ENCODE measurements at regions of chr4 and their contacts with region 1.

Region 1: GRCh38 chr4:174631901-174632758 is 109.8 kb upstream of the HPGD start:
- DNase-seq: no peak
- H3K4me3 Mint-ChIP-seq: no peak overlapping the region
- H3K27ac Mint-ChIP-seq: no peak overlapping the region
- H3K4me1 Mint-ChIP-seq: no peaks in the 10 kb centered on the region
- H3K27me3 Mint-ChIP-seq: no peaks in the 10 kb centered on the region

Region 2: GRCh38 chr4:174490451-174490870 is 141.7 kb before region 1 on chr4:
- CTCF ChIA-PET with region 1: no interaction called
- intact Hi-C with region 1: no loop called
- DNase-seq: no peak
- H3K4me3 Mint-ChIP-seq: no peak overlapping the region
- H3K27ac Mint-ChIP-seq: no peak overlapping the region
- H3K4me1 Mint-ChIP-seq: no peaks in the 10 kb centered on the region
- H3K27me3 Mint-ChIP-seq: no peaks in the 10 kb centered on the region

Region 3: DNA sequence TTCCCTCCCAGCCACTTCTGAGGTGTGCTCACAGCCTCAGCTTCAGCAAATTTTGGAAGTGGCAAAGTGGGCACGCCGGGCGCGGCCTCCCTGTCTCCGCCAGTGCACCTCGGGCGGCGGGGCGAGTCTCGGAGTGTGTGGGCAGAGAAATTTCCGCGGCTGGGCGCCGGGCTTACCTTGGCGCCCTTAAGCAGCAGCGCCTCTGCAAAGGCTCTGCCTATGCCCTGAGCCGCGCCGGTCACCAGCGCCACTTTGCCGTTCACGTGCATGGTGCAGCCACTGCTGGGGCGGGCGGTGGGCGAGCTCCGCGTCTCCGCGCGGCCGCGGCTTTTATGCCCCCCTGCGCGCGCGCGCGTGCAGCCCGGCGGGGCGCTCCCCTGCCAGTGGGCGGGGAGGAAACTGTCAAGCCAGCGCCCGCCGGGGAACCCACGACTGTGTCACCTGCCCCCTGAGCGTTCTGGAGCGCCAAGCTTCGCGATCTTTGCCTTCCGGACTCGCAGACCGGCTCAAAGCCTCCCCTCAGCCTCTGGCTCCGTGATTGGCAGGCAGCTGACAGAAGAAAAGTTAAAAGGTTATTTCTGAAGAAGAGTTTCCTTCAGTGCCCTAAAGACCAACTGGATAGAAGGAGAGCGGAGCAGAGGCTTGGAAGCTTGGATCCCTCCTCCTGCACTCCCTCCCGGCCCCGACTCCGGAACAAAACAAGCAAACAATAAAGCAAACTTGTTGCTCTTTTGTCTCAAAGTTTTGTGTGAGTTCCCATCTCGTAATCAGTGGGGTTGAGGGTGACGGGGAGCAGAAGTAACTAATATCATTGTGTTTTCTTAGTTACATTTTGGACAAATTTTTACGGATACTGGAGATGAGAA is 109.7 kb before region 1 on chr4 and contains the start of gene HPGD:
- CTCF ChIA-PET with region 1: interaction called, 3 read pairs
- intact Hi-C with region 1: loop called (anchors 2 kb)
- DNase-seq: peak; percentile 73
- H3K4me3 Mint-ChIP-seq: peak within 1 kb of the TSS; percentile 73
- H3K27ac Mint-ChIP-seq: peak within 1 kb of the TSS; percentile 46
- H3K4me1 Mint-ChIP-seq: peaks cover 13% of the 10 kb centered on the region
- H3K27me3 Mint-ChIP-seq: peaks cover 36% of the 10 kb centered on the region
- total RNA-seq, gene HPGD: 1.5 to 2.8 TPM

Region 4: GRCh38 chr4:174714393-174715211 is 82.5 kb after region 1 on chr4:
- CTCF ChIA-PET with region 1: no interaction called
- intact Hi-C with region 1: loop called (anchors 5 kb)
- DNase-seq: peak; percentile 31
- H3K4me3 Mint-ChIP-seq: no peak overlapping the region
- H3K27ac Mint-ChIP-seq: no peak overlapping the region
- H3K4me1 Mint-ChIP-seq: no peaks in the 10 kb centered on the region
- H3K27me3 Mint-ChIP-seq: peaks cover 7% of the 10 kb centered on the region

Region 5: DNA sequence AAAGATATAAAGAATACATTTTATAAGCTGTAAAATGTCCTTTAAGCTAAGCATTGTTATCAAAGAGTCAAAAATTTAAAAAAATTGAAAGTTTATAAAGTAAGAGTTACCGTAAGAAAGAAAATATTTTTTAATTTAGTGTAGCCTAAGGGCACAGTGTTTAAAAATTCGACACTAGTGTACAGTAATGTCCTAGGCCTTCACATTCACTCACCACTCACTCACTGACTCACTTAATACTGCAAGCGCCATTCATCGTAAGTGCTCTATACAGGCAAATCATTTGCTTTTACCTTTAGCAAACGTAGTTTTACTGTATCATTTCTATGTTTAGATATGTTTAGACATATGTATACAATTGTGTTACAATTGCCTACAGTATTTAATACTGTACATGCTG is 176.7 kb after region 1 on chr4:
- CTCF ChIA-PET with region 1: no interaction called
- intact Hi-C with region 1: no loop called
- DNase-seq: no peak
- H3K4me3 Mint-ChIP-seq: no peak overlapping the region
- H3K27ac Mint-ChIP-seq: no peak overlapping the region
- H3K4me1 Mint-ChIP-seq: no peaks in the 10 kb centered on the region
- H3K27me3 Mint-ChIP-seq: no peaks in the 10 kb centered on the region

Region 6: DNA sequence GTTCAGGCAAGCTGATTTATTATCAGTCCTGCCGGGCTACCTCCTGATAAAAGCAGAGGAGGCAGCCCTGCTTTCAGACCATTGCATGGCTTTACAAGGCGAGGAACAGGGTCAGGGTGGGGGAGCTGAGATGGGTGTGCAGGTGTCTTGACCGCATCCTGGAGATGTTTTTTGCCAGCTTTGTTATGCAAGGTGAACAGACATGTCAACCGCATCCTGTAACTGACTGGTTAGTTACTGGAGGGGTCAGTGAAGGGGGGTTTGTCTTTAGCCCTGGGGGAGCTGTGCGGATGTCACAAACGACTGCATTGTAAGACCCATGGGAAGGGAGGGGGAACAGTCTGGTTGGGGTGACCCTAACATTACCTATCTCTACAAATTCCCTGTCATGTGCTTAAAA is 296.0 kb after region 1 on chr4:
- CTCF ChIA-PET with region 1: no interaction called
- intact Hi-C with region 1: no loop called
- DNase-seq: no peak
- H3K4me3 Mint-ChIP-seq: no peak overlapping the region
- H3K27ac Mint-ChIP-seq: no peak overlapping the region
- H3K4me1 Mint-ChIP-seq: no peaks in the 10 kb centered on the region
- H3K27me3 Mint-ChIP-seq: no peaks in the 10 kb centered on the region

Region 7: DNA sequence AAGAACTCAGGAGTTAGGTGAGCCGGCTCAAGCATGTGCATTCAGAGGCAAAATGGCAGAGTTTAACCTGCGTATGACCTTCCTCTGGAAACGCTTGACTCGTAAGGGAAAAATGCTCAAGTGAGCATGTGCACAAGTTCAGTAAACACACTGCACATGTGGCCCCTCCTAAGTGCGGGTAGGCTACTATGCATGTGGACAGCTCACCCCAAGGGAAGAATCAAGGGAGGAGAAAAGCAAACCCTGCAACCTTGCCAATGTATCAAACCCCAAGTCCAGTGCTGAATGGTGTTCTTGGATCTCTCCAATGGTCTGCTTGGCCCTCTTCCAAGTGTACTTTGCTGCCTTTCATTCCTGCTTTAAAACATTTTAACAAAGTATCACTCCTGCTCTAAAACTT is 693.1 kb after region 1 on chr4:
- CTCF ChIA-PET with region 1: no interaction called
- intact Hi-C with region 1: no loop called
- DNase-seq: no peak
- H3K4me3 Mint-ChIP-seq: no peak overlapping the region
- H3K27ac Mint-ChIP-seq: no peak overlapping the region
- H3K4me1 Mint-ChIP-seq: no peaks in the 10 kb centered on the region
- H3K27me3 Mint-ChIP-seq: no peaks in the 10 kb centered on the region